Uterus (tissue), 4 donors: ENCODE measurements at regions of chr6 and their contacts with region 1.

Region 1: DNA sequence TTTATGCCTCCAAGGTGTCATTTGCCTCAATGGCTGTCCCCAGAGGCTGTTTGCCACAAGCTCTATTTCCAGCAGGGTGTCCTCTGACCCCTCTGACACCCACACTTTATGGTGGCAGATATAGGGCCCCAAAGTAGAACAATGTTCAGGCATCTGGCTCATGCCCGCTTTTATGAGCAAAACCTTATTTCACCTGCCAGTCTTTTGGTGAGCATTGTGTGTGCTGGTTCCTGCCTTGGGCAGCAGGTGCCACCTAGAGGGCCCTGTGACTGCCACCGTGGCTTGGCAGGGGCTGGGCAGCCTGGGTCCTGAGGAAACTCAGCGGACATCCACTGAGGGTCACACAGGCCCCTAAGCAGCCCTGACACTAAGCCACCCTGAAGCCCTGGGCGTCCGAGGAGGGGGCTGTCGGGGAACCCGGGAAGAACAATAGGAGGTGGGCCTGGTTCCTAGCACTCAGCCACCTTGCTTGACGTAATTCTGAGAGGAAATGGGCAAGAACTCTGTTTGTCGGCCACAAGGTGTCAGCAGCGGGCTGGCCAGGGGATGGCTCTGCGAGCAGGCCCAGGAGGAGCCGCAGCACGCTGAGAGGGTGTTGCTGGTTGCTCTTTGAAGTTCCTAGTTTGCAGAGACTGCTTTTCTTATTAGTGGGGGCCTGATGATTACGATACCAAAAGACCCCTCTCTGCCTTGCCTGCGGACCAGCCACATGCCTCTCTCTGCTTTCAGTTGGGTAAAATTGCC is 148.9 kb downstream of the SCML4 start:
- DNase-seq: peak; percentile 83 to 89
- H3K4me3 ChIP-seq: no peak overlapping the region
- H3K27ac ChIP-seq: peak overlapping the region; percentile 57 to 65
- H3K4me1 ChIP-seq: peaks cover 0 to 7% of the 10 kb centered on the region in 2 donors
- H3K27me3 ChIP-seq: no peaks in the 10 kb centered on the region
- CTCF ChIP-seq: peak; percentile 91 to 94 (median 93)
- POLR2A ChIP-seq: no peak

Region 2: DNA sequence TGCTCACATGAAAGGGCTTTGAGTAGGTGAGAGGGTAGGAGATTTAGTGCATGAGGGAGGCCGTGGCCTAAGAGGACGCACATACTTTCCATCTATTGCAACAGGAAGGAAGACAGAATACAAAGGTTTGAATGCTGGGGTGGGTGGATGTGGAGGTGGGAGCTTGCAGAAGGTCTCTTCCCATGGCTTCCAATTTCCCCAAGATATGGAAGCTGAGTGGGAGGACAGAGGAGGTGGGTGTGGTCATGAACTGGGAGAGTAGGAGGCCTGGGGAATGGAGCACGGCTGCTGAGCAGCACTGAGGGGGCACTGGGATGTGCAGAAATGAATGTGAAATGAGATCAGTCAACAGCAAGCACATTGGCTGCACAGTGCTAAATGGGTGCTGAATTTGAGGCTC is 78.6 kb after region 1 on chr6:
- intact Hi-C with region 1: no loop called
- DNase-seq: no peak
- H3K4me3 ChIP-seq: no peak overlapping the region
- H3K27ac ChIP-seq: no peak overlapping the region
- H3K4me1 ChIP-seq: no peaks in the 10 kb centered on the region
- H3K27me3 ChIP-seq: no peaks in the 10 kb centered on the region
- CTCF ChIP-seq: no peak
- POLR2A ChIP-seq: no peak

Region 3: GRCh38 chr6:107847844-107848802 is 173.0 kb after region 1 on chr6:
- intact Hi-C with region 1: loop called (anchors 5 kb)
- DNase-seq: peak; percentile 79 to 89
- H3K4me3 ChIP-seq: peak overlapping the region in 1 of 2 donors; percentile 39
- H3K27ac ChIP-seq: no peak overlapping the region
- H3K4me1 ChIP-seq: no peaks in the 10 kb centered on the region
- H3K27me3 ChIP-seq: no peaks in the 10 kb centered on the region
- CTCF ChIP-seq: peak; percentile 88 to 97 (median 92)
- POLR2A ChIP-seq: no peak